Activated B cell treated with CpG ODN at 0.5 μM for 24 hours (primary cell): ENCODE measurements at regions of chr2 and their contacts with region 1.

Region 1: GRCh38 chr2:207558106-207558505 is 28.3 kb downstream of the CREB1 start:
- DNase-seq: no peak
- ATAC-seq: no peak
- H3K4me3 Mint-ChIP-seq: no peak overlapping the region
- H3K27ac Mint-ChIP-seq: no peak overlapping the region
- H3K4me1 Mint-ChIP-seq: peaks cover 24% of the 10 kb centered on the region
- H3K27me3 Mint-ChIP-seq: no peaks in the 10 kb centered on the region
- CTCF ChIP-seq: no peak

Region 2: DNA sequence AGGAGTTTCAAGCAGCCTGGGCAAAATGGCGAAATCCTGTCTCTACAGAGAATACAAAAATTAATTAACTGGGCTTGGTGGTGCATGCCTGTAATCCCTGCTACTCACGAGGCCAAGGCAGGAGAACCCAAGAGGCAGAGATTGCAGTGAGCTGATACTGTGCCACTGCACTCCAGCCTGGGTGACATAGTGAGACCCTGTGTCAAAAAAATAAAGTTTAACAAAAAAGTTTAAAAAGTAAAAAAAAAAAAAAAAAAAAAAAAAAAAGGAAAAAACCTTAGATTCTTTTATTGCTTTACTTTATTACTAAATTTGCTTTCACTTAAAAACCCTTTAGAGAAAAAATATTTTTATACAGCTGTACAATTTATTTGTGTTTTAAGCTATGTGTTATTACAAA is 17.7 kb before region 1 on chr2:
- CTCF ChIA-PET with region 1: no interaction called
- POLR2A ChIA-PET with region 1: interaction called, 3 read pairs
- intact Hi-C with region 1: loop called (anchors 2 kb)
- DNase-seq: no peak
- ATAC-seq: no peak
- H3K4me3 Mint-ChIP-seq: no peak overlapping the region
- H3K27ac Mint-ChIP-seq: no peak overlapping the region
- H3K4me1 Mint-ChIP-seq: peaks cover 56% of the 10 kb centered on the region
- H3K27me3 Mint-ChIP-seq: no peaks in the 10 kb centered on the region
- CTCF ChIP-seq: no peak

Region 3: GRCh38 chr2:207546822-207547221 is 11.3 kb before region 1 on chr2:
- CTCF ChIA-PET with region 1: no interaction called
- POLR2A ChIA-PET with region 1: interaction called, 3 read pairs
- intact Hi-C with region 1: loop called (anchors 2 kb)
- DNase-seq: no peak
- ATAC-seq: no peak
- H3K4me3 Mint-ChIP-seq: no peak overlapping the region
- H3K27ac Mint-ChIP-seq: no peak overlapping the region
- H3K4me1 Mint-ChIP-seq: peaks cover 61% of the 10 kb centered on the region
- H3K27me3 Mint-ChIP-seq: no peaks in the 10 kb centered on the region
- CTCF ChIP-seq: no peak

Region 4: DNA sequence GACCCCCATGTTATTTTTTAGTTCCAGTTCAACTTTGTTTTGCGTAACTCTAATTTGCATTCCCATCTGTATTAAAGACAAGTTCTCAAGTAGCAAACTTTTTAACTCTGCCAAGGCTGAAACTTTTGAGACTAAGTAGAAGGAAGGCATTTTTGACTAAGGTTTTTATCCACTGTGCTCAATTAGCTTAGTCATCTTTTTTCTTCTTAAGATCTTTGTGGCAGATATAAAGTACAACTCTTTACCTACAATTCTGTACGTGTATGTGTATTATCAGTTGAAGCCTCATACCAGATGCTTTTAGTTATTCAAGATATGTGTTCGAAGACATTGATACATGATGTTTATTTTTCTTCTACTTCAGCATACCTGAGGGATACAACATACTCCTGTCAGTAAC is 13.3 kb after region 1 on chr2:
- CTCF ChIA-PET with region 1: no interaction called
- POLR2A ChIA-PET with region 1: no interaction called
- intact Hi-C with region 1: loop called (anchors 2 kb)
- DNase-seq: no peak
- ATAC-seq: no peak
- H3K4me3 Mint-ChIP-seq: no peak overlapping the region
- H3K27ac Mint-ChIP-seq: no peak overlapping the region
- H3K4me1 Mint-ChIP-seq: peaks cover 8% of the 10 kb centered on the region
- H3K27me3 Mint-ChIP-seq: no peaks in the 10 kb centered on the region
- CTCF ChIP-seq: no peak

Region 5: DNA sequence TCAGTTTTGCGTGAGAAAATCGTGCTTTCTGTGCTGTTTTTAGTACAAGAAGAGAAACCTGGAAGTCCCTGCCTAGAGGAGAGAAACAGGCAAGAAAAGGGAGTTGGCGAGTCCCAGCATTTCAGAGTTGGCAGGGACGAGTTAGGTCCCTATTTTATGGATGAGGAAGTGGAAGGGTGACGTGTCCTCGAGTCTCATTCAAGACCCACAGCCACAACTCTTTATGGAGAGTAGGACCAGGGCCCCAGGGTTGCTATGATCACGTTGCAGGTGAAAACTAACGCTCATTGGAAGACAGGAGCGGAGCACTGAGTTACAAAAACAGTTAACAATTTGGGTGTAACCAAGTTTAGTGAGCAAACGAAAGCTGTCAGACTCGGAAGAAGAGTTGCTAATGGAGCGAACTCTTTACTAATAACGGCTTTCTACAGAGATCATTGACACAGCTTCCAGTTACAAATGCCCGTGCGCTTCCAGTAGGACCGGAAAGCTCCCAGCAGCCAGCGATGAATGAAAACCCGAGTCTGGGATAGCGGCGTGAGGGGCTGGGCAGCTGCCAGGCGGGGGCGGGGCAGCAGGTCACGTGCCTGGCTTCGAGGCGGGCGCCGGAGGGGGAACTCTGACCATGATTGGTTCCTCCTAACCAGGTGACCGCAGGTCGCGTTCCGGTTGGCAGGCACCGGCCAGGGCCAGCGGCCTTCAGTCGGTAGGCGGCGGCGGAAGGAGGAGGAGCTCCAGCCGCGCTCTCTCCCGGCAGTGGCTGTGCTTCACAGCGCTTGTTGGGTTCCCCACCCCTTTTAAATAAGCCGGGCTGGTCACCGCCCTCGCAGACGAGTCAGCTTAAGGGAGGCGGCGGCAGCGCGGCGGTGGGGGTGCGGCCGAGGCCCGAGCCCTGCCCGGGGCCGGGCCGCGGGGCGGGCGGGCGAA is 153.0 kb after region 1 on chr2 and contains the start of gene CCNYL1:
- CTCF ChIA-PET with region 1: no interaction called
- POLR2A ChIA-PET with region 1: no interaction called
- intact Hi-C with region 1: no loop called
- DNase-seq: peak; percentile 92
- ATAC-seq: peak; percentile 95
- H3K4me3 Mint-ChIP-seq: peak within 1 kb of the TSS; percentile 95
- H3K27ac Mint-ChIP-seq: peak within 1 kb of the TSS; percentile 85
- H3K4me1 Mint-ChIP-seq: peaks cover 23% of the 10 kb centered on the region
- H3K27me3 Mint-ChIP-seq: no peaks in the 10 kb centered on the region
- CTCF ChIP-seq: no peak
- total RNA-seq, gene CCNYL1: 12.2 and 13.5 TPM in 2 replicates

Region 6: GRCh38 chr2:208315081-208315788 is 757.1 kb after region 1 on chr2:
- CTCF ChIA-PET with region 1: no interaction called
- POLR2A ChIA-PET with region 1: no interaction called
- intact Hi-C with region 1: no loop called
- DNase-seq: no peak
- ATAC-seq: peak; percentile 54
- H3K4me3 Mint-ChIP-seq: peak overlapping the region; percentile 89
- H3K27ac Mint-ChIP-seq: peak overlapping the region; percentile 93
- H3K4me1 Mint-ChIP-seq: peaks cover 77% of the 10 kb centered on the region
- H3K27me3 Mint-ChIP-seq: no peaks in the 10 kb centered on the region
- CTCF ChIP-seq: no peak